ENCODE measurements at regions of chrX and their contacts with region 1.

Region 1: GRCh38 chrX:17736856-17737706 is at the start of gene SCML1:
- DNase-seq: peak; percentile 98
- ATAC-seq: peak; percentile 95
- H3K4me3 ChIP-seq: peak within 1 kb of the TSS; percentile 41 to 72
- H3K27ac ChIP-seq: peak within 1 kb of the TSS in 1 of 2 donors; percentile 83
- H3K4me1 ChIP-seq: no peaks in the 10 kb centered on the region
- H3K27me3 ChIP-seq: no peaks in the 10 kb centered on the region
- total RNA-seq, gene SCML1: 13.0 to 16.0 TPM

Region 2: DNA sequence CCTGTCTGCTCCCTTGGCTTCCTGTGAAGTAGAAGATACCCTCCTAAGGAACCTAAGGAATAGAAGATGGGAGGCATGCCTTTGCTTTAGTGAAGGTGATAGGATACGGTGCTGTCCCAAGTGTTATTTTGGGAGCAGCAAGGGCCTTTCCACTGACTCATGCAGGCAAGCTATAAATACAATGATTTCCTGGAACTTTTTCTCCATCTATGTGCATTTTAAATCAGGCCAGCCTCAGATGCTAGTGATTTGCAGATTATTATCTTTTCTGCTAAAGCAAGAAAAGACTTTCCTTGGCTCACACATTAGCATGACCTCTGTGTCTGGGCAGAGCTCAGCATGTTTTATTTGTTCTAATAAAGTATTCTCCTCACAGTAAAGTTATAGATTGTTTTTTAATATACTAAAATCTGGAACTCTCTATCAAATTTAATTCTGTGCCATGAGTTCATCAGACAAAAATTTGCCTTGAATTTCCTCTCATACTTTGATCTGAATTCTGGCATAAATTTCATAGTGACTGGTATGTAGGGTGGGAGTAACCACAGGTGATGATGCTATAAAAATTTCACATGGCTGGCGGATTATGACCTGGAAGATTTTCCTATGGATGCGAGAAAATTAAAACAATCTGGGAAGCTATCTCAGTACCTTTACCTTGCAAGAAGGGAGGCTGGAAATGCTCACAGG is 658.9 kb before region 1 on chrX:
- intact Hi-C with region 1: loop called in 1 of 2 experiments (anchors 5 kb)
- DNase-seq: no peak
- ATAC-seq: peak; percentile 44
- H3K4me3 ChIP-seq: no peak overlapping the region
- H3K27ac ChIP-seq: peak overlapping the region; percentile 80 to 97
- H3K4me1 ChIP-seq: peaks cover 4% of the 10 kb centered on the region in 2 donors
- H3K27me3 ChIP-seq: no peaks in the 10 kb centered on the region